ENCODE measurements at regions of chr15 and their contacts with region 1.

Region 1: DNA sequence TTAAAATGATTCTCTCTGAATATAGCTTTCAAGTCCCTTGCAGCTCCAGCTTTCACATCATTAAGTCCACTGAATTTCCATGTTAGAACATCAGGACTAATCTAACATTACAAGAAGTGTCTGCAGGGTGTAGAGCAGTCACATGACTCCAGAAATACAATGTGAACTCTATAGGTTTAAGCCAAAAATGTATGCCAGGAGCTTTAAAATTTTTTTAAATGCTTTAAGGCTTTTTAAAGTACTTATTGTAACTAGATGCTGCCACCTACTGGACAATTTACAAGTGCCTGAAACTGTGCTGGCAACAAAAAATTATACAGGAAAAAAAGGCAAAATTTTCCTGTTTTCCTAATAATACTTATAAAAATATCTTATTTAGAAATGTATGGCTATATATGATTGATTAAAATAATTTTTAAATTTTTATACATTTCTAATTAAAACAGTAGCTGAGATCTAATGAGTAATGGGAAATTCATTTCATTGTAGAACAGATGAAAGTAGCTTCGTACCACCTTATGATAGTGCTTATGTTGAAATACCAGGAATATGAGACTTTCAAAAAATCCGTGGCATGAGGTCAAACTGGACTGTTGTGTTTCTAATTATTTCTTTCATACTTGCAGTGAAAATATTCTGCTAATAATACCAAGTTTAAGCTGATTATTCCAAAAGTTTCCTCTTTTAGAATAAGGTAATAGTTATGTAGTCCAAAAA is 25.7 kb downstream of the FSIP1 start:
- DNase-seq: peak in 1 of 2 donors; percentile 36
- H3K4me3 ChIP-seq: no peak overlapping the region
- H3K27ac ChIP-seq: no peak overlapping the region
- H3K4me1 ChIP-seq: peaks cover 0 to 4% of the 10 kb centered on the region in 2 donors
- H3K27me3 ChIP-seq: no peaks in the 10 kb centered on the region
- CTCF ChIP-seq: peak; percentile 61 to 84 (median 76)
- POLR2A ChIP-seq: no peak

Region 2: DNA sequence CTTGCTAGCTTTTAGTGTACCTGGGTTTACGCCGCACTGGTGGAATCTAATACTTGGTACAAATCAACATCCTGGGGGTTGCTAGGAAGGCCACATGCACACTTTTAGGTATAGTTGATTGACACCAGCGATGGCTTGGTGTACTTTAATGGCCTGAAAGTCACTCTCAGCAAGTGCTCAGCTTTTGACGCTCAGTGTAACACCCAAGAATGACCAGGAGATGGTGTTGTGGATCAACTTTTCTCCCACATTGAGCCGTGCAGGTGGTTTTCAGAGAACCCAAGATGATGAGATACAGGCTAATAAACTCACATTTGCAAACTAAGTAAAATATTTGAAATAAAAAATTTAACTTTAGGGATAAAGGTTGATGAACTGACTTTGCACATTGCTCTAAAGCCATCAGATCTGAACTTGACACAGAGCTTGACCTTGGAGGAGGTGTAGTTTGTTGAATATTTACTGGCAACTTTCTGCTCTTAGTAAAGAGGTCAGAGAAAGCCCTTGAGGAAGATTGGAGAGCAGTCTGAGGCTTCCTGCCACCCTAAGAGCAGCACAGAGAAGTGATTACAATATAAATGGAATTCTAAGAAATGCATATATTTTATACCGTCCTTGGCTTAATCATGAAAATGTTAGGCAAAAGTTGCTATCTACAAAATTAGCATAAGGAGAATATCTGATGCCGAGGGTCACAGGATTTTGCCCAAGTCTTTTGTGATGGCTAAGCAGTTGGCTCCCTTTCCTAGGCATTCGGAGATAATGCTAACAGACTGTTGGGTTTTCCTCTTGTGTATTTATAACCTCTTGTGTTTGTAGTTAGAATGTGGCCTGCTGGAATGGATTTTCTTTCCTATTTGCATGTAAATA is 1048.9 kb before region 1 on chr15:
- intact Hi-C with region 1: loop called (anchors 5 kb)
- DNase-seq: peak; percentile 24 to 29
- H3K4me3 ChIP-seq: no peak overlapping the region
- H3K27ac ChIP-seq: no peak overlapping the region
- H3K4me1 ChIP-seq: no peaks in the 10 kb centered on the region
- H3K27me3 ChIP-seq: no peaks in the 10 kb centered on the region
- CTCF ChIP-seq: peak; percentile 44 to 84 (median 73)
- POLR2A ChIP-seq: no peak